GM12878 (cell line): ENCODE measurements at regions of chr20 and their contacts with region 1.

Region 1: GRCh38 chr20:50980851-50981713 is 22.5 kb downstream of the MOCS3 start:
- DNase-seq: peak; percentile 2
- ATAC-seq: peak; percentile 88
- H3K4me3 ChIP-seq: no peak overlapping the region
- H3K27ac ChIP-seq: no peak overlapping the region
- H3K4me1 ChIP-seq: no peaks in the 10 kb centered on the region
- H3K27me3 ChIP-seq: no peaks in the 10 kb centered on the region; a peak in 1 of 4 replicates
- CTCF ChIP-seq: peak; percentile 70 to 90 (median 74)
- EP300 ChIP-seq: no peak
- POLR2A ChIP-seq: no peak
- RAD21 ChIP-seq: peak; percentile 38

Region 2: DNA sequence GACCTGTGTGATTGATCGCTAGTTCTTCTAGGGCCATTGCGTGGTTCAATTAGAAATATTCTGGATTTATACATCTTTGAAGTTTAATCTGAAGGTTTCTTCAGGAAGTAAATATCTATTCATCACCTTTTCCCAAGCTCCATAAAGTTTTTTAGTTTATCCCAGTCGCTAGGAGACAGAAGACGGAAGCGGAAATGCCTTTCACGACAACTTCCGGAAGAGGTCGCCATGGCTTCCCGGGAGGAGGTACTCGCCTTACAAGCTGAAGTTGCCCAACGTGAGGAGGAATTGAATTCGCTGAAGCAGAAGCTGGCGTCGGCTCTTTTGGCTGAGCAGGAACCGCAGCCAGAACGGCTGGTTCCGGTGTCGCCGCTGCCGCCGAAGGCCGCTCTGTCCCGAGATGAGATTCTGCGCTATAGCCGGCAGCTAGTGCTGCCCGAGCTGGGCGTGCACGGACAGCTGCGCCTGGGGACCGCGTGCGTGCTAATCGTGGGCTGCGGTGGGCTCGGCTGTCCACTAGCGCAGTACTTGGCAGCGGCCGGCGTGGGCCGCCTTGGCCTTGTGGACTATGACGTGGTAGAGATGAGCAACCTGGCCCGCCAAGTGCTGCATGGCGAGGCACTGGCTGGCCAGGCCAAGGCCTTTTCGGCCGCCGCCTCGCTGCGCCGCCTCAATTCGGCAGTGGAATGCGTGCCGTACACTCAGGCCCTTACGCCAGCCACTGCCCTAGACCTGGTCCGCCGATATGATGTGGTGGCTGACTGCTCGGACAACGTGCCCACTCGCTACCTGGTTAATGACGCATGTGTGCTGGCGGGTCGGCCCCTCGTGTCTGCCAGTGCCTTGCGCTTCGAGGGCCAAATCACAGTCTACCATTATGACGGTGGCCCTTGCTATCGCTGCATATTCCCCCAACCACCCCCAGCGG is 22.2 kb before region 1 on chr20 and contains the start of gene MOCS3:
- CTCF ChIA-PET with region 1: interaction called, 14 read pairs
- POLR2A ChIA-PET with region 1: no interaction called
- RAD21 ChIA-PET with region 1: interaction called, 5 read pairs
- SMC1A ChIA-PET with region 1: interaction called, 6 read pairs
- in situ Hi-C with region 1: no loop called
- intact Hi-C with region 1: no loop called
- DNase-seq: peak; percentile 86
- ATAC-seq: peak; percentile 88
- H3K4me3 ChIP-seq: peak within 1 kb of the TSS; percentile 88
- H3K27ac ChIP-seq: peak within 1 kb of the TSS; percentile 96
- H3K4me1 ChIP-seq: peaks cover 13% of the 10 kb centered on the region
- H3K27me3 ChIP-seq: no peaks in the 10 kb centered on the region
- CTCF ChIP-seq: no peak
- EP300 ChIP-seq: no peak
- POLR2A ChIP-seq: no peak; the same call in 1 of the 2 replicates
- RAD21 ChIP-seq: no peak
- polyA plus RNA-seq, gene MOCS3: 0.87 to 0.99 TPM

Region 3: DNA sequence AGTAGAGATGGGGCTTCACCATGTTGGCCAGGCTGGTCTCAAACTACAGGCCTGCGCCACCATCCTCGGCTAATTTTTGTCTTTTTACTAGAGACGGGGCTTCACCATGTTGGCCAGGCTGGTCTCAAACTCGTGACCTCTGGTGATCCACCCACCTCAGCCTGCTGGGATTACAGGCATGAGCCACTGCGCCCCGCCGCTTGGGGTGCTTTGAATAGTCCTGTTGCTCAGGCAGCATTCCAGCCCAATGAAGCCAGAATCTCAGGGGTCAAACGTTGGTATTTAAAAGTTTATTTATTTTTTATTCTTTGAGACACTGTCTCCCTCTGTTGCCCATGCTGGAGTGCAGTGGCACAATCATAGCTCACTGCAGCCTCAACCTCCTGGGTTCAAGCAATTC is 11.2 kb before region 1 on chr20:
- CTCF ChIA-PET with region 1: interaction called, 14 read pairs
- POLR2A ChIA-PET with region 1: interaction called, 3 read pairs
- RAD21 ChIA-PET with region 1: no interaction called
- SMC1A ChIA-PET with region 1: interaction called, 3 read pairs
- in situ Hi-C with region 1: no loop called
- intact Hi-C with region 1: no loop called
- DNase-seq: no peak
- ATAC-seq: no peak
- H3K4me3 ChIP-seq: no peak overlapping the region
- H3K27ac ChIP-seq: no peak overlapping the region
- H3K4me1 ChIP-seq: no peaks in the 10 kb centered on the region
- H3K27me3 ChIP-seq: no peaks in the 10 kb centered on the region; a peak in 2 of 4 replicates
- CTCF ChIP-seq: no peak
- EP300 ChIP-seq: no peak
- POLR2A ChIP-seq: no peak
- RAD21 ChIP-seq: no peak

Region 4: DNA sequence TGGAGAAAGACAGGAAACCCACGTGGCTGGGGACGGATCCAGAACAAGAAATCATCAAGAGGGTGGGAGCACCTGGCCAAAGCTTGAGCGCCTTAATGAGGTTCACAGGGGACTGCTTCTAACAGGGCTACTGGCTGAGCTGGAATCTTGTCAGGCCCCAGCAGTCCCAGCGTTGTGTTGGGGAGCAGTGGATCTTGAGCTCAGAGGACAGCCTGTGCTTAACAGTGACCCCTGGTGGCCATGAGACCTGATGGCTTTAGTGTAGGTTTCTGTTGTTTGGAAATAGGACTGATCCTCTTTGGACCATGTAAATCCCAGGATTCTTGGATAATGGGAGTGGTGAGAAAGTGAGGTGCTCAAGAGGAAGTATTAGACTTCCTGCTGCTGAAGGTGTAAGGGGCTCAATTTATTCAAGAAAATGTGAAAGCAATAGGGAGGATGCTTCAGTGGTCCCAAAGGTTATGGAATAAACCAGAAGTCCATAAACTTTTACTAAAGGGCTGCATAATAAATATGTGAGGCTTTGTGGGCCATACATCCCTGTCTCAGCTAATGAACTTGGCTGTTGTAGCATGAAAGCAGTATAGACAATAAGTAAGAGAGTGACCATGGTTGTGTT is 345.2 kb after region 1 on chr20:
- CTCF ChIA-PET with region 1: interaction called, 39 read pairs
- POLR2A ChIA-PET with region 1: no interaction called
- RAD21 ChIA-PET with region 1: no interaction called
- SMC1A ChIA-PET with region 1: interaction called, 4 read pairs
- in situ Hi-C with region 1: no loop called
- intact Hi-C with region 1: loop called (anchors 2 kb)
- DNase-seq: no peak
- ATAC-seq: peak; percentile 59
- H3K4me3 ChIP-seq: no peak overlapping the region
- H3K27ac ChIP-seq: no peak overlapping the region
- H3K4me1 ChIP-seq: no peaks in the 10 kb centered on the region
- H3K27me3 ChIP-seq: no peaks in the 10 kb centered on the region; a peak in 2 of 4 replicates
- CTCF ChIP-seq: peak; percentile 46 to 67 (median 65)
- EP300 ChIP-seq: no peak
- POLR2A ChIP-seq: no peak
- RAD21 ChIP-seq: peak; percentile 26; the same call in 1 of the 2 replicates

Region 5: DNA sequence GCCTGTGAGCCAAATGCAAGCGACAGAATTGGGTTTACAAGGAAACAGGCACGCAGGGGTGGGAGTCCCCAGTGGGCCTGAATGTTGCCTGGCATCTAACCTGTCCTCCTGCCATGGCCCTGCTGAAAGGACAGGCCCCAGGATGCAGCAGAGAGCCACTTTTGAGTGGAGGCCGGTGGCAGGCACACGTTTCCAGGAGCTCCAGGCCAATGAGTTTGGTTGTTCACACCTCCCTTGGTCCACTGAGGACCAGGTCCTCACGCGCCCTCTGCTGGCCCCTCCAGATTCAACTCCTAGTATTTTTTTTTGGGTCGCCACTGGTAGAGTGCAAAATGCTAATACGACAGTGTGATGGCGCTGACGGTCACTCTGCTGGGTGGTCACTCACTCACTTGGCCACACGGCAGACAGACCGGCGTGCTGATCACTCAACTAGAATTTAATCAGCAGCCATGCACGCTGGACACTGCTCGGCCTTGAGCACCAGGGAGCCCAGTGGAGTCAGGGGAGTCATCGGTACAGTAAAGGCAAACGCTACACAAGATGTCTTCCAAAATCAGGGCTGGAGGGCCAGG is 643.2 kb after region 1 on chr20:
- CTCF ChIA-PET with region 1: interaction called, 3 read pairs
- POLR2A ChIA-PET with region 1: no interaction called
- RAD21 ChIA-PET with region 1: no interaction called
- SMC1A ChIA-PET with region 1: no interaction called
- in situ Hi-C with region 1: loop called (anchors 10 kb)
- intact Hi-C with region 1: loop called (anchors 5 kb)
- DNase-seq: no peak
- ATAC-seq: peak; percentile 83
- H3K4me3 ChIP-seq: no peak overlapping the region
- H3K27ac ChIP-seq: no peak overlapping the region
- H3K4me1 ChIP-seq: peaks cover 22% of the 10 kb centered on the region
- H3K27me3 ChIP-seq: no peaks in the 10 kb centered on the region; a peak in 1 of 4 replicates
- CTCF ChIP-seq: peak; percentile 72 to 82 (median 80); a peak in 5 of 6 replicates
- EP300 ChIP-seq: no peak
- POLR2A ChIP-seq: no peak
- RAD21 ChIP-seq: peak; percentile 69